ENCODE measurements at regions of chr17 and their contacts with region 1.

Region 1: DNA sequence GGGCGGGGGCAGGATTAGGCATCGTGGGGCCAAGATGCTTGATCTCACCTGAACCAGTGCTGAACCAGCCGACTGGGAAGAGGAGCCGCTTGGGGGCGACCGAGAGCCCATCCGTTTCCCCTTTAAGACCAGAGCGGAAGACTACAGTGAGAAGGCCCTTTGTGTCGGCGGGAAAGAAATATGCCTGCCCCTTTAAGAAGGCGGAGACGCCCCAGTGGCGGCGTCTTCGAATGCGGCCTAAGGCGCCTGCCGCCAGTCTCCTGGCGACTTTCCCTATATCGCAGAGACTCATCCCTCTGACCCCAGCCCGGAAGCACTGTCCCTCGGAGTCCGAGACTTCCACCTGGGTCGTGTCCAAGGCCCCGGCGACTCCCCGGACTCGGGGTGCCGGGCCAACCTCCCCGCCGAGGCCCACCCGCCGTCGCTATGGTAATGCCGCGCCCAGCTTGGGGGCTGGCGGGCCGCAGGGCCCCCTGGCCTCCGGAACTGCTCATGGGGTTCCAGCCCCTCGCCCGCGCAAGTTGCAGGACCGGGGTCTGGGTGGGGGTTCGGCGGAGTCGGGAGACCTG is at the start of gene HROB:
- DNase-seq: peak; percentile 86 to 96
- H3K4me3 ChIP-seq: peak within 1 kb of the TSS; percentile 91
- H3K27ac ChIP-seq: peak within 1 kb of the TSS; percentile 61
- H3K4me1 ChIP-seq: peaks cover 29% of the 10 kb centered on the region
- H3K27me3 ChIP-seq: no peaks in the 10 kb centered on the region
- CTCF ChIP-seq: peak; percentile 83
- total RNA-seq, gene HROB: 14.5 and 15.7 TPM in 2 replicates

Region 2: GRCh38 chr17:44044067-44044466 is 97.7 kb before region 1 on chr17:
- CTCF ChIA-PET with region 1: no interaction called
- POLR2A ChIA-PET with region 1: interaction called, 11 read pairs
- intact Hi-C with region 1: no loop called
- DNase-seq: no peak
- H3K4me3 ChIP-seq: no peak overlapping the region
- H3K27ac ChIP-seq: no peak overlapping the region
- H3K4me1 ChIP-seq: no peaks in the 10 kb centered on the region
- H3K27me3 ChIP-seq: no peaks in the 10 kb centered on the region
- CTCF ChIP-seq: no peak

Region 3: GRCh38 chr17:44091200-44091997 is 50.4 kb before region 1 on chr17:
- CTCF ChIA-PET with region 1: no interaction called
- POLR2A ChIA-PET with region 1: no interaction called
- intact Hi-C with region 1: no loop called
- DNase-seq: no peak
- H3K4me3 ChIP-seq: no peak overlapping the region
- H3K27ac ChIP-seq: no peak overlapping the region
- H3K4me1 ChIP-seq: peaks cover 27% of the 10 kb centered on the region
- H3K27me3 ChIP-seq: no peaks in the 10 kb centered on the region
- CTCF ChIP-seq: no peak

Region 4: DNA sequence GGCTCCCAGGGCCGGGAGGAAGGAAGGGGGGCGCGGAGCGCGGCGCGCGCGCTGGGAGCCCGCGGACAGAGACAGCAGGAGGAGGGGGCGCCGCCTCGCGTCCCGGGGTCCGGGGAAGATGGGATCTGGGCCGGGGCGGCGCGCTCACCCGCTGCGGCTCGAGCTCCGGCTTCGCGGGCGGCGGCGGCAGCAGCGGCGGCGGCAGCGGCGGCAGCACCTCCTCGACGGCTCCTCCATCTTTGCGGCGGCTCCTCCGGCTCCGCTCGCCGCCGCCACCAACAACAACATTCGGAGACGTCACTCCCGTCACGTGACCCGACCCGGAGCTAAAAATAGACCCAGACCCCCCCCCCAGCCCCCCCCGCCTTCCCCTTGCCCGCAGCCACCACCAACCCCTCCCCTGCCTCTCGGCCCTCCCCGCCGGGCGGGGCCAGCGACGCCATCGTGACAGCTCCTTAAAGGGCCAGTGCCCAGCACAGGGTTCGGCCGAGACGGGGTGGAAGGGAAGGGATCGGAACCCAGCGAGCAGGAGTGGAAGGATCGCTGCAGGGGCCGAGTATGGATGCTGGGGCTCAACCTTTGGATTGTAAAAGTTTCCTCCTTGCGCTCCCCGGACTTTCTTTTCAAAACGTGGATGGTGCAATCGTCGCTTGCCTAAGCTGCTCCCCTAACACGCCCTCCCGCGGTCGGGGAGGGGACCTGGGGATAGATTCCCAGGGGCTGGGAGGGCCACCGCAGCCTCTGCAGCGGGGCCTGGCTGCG is 18.3 kb before region 1 on chr17 and contains the start of gene HDAC5:
- CTCF ChIA-PET with region 1: interaction called, 14 read pairs
- POLR2A ChIA-PET with region 1: interaction called, 11 read pairs
- intact Hi-C with region 1: loop called (anchors 1 kb)
- DNase-seq: peak; percentile 75 to 91
- H3K4me3 ChIP-seq: peak within 1 kb of the TSS; percentile 84
- H3K27ac ChIP-seq: peak within 1 kb of the TSS; percentile 68
- H3K4me1 ChIP-seq: peaks cover 7% of the 10 kb centered on the region
- H3K27me3 ChIP-seq: peaks cover 4% of the 10 kb centered on the region; the same call in 1 of the 2 replicates
- CTCF ChIP-seq: peak; percentile 75
- total RNA-seq, gene HDAC5: 24.0 and 40.5 TPM in 2 replicates

Region 5: GRCh38 chr17:44199553-44200477 is 58.0 kb after region 1 on chr17 and contains the start of gene ATXN7L3:
- CTCF ChIA-PET with region 1: no interaction called
- POLR2A ChIA-PET with region 1: no interaction called
- intact Hi-C with region 1: no loop called
- DNase-seq: peak; percentile 90 to 97
- H3K4me3 ChIP-seq: peak within 1 kb of the TSS; percentile 92
- H3K27ac ChIP-seq: peak within 1 kb of the TSS; percentile 77
- H3K4me1 ChIP-seq: peaks cover 35% of the 10 kb centered on the region
- H3K27me3 ChIP-seq: no peaks in the 10 kb centered on the region
- CTCF ChIP-seq: no peak
- total RNA-seq, gene ATXN7L3: 59.3 and 87.4 TPM in 2 replicates

Region 6: DNA sequence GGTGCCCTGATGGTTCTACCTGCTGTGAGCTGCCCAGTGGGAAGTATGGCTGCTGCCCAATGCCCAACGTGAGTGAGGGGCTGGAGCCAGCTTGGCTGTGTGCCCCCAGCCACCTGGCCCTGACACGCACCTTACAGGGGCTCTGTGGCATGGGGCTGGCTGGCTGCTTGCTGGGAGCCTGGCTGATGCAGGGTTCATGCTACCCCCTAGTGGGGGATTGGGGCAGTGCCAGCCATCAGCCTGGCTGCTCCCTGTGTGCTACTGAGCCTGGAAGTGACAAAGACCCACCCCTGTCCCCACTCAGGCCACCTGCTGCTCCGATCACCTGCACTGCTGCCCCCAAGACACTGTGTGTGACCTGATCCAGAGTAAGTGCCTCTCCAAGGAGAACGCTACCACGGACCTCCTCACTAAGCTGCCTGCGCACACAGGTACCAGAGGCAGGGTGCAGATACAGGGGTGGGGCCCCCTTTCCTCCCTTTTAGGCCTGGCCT is 209.0 kb after region 1 on chr17:
- CTCF ChIA-PET with region 1: no interaction called
- POLR2A ChIA-PET with region 1: interaction called, 11 read pairs
- intact Hi-C with region 1: no loop called
- DNase-seq: peak in 1 of 2 experiments; percentile 61
- H3K4me3 ChIP-seq: no peak overlapping the region
- H3K27ac ChIP-seq: no peak overlapping the region
- H3K4me1 ChIP-seq: peaks cover 5% of the 10 kb centered on the region
- H3K27me3 ChIP-seq: no peaks in the 10 kb centered on the region
- CTCF ChIP-seq: peak; percentile 86

Region 7: GRCh38 chr17:44623070-44623725 is 481.4 kb after region 1 on chr17:
- CTCF ChIA-PET with region 1: no interaction called
- POLR2A ChIA-PET with region 1: interaction called, 11 read pairs
- intact Hi-C with region 1: no loop called
- DNase-seq: no peak
- H3K4me3 ChIP-seq: no peak overlapping the region
- H3K27ac ChIP-seq: no peak overlapping the region
- H3K4me1 ChIP-seq: no peaks in the 10 kb centered on the region
- H3K27me3 ChIP-seq: no peaks in the 10 kb centered on the region
- CTCF ChIP-seq: no peak; the same call in 1 of the 2 replicates

Measured in PC-9 (cell line).